Activated CD4-positive, alpha-beta T cell treated with anti-CD3 and anti-CD28 coated beads for 36 hours (primary cell): ENCODE measurements at regions of chr3 and their contacts with region 1.

Region 1: GRCh38 chr3:149812606-149813366 is at the start of gene RNF13:
- DNase-seq: peak; percentile 96
- ATAC-seq: peak; percentile 95
- H3K4me3 Mint-ChIP-seq: peak within 1 kb of the TSS; percentile 95
- H3K27ac Mint-ChIP-seq: peak within 1 kb of the TSS; percentile 100
- H3K4me1 Mint-ChIP-seq: peaks cover 46% of the 10 kb centered on the region
- H3K27me3 Mint-ChIP-seq: peaks cover 3% of the 10 kb centered on the region
- total RNA-seq, gene RNF13: 28.8 to 41.2 TPM

Region 2: GRCh38 chr3:148615385-148615784 is 1197.4 kb before region 1 on chr3:
- CTCF ChIA-PET with region 1: no interaction called
- POLR2A ChIA-PET with region 1: no interaction called
- intact Hi-C with region 1: no loop called
- DNase-seq: no peak
- ATAC-seq: no peak
- H3K4me3 Mint-ChIP-seq: no peak overlapping the region
- H3K27ac Mint-ChIP-seq: no peak overlapping the region
- H3K4me1 Mint-ChIP-seq: no peaks in the 10 kb centered on the region
- H3K27me3 Mint-ChIP-seq: no peaks in the 10 kb centered on the region

Region 3: DNA sequence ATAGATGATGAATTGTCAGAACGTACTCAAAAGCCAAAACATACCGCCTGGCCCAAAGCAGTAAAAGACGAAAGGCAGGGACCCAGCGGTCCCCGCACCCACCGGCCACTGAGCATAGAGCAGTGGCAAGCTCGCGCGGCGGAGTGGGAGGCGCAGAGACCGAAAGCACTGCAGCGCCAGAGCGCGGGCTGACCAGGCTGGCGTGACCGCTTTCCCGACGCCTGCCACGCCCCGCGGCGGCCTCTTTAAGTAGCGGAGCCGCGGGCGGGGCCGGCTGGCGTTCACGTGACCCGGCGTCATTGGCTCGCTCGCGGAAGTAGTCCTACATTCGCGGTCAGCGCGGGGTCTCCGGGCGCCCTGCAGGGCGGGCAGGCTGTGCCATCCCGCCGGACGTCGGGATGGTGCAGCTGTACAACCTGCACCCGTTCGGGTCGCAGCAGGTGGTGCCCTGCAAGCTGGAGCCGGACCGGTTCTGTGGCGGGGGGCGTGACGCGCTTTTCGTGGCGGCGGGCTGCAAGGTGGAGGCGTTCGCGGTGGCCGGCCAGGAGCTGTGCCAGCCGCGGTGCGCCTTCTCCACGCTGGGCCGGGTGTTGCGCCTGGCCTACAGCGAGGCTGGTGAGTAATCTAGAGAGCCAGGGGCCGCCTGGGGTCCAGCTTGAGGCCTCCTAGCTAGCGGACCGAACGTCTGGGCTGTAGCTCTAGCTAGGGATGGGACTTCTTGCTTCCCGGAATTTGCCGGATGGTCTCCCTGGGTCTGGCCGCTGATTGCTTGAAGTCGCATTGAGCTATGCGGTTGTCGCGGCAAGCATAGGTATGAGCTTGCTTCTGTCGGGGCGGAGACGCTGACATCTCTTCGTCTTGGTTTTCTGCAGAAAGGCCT is 683.2 kb before region 1 on chr3 and contains the start of gene HPS3:
- CTCF ChIA-PET with region 1: no interaction called
- POLR2A ChIA-PET with region 1: no interaction called
- intact Hi-C with region 1: loop called in 1 of 2 experiments (anchors 1 kb)
- DNase-seq: peak; percentile 90
- ATAC-seq: peak; percentile 91
- H3K4me3 Mint-ChIP-seq: peak within 1 kb of the TSS; percentile 90
- H3K27ac Mint-ChIP-seq: peak within 1 kb of the TSS; percentile 82
- H3K4me1 Mint-ChIP-seq: peaks cover 37% of the 10 kb centered on the region
- H3K27me3 Mint-ChIP-seq: peaks cover 8% of the 10 kb centered on the region
- total RNA-seq, gene HPS3: 18.0 to 20.2 TPM

Region 4: GRCh38 chr3:149512209-149512782 is 300.5 kb before region 1 on chr3:
- CTCF ChIA-PET with region 1: interaction called, 5 read pairs
- POLR2A ChIA-PET with region 1: no interaction called
- intact Hi-C with region 1: loop called (anchors 2 to 5 kb)
- DNase-seq: peak; percentile 56
- ATAC-seq: peak; percentile 57
- H3K4me3 Mint-ChIP-seq: no peak overlapping the region
- H3K27ac Mint-ChIP-seq: no peak overlapping the region
- H3K4me1 Mint-ChIP-seq: peaks cover 17% of the 10 kb centered on the region
- H3K27me3 Mint-ChIP-seq: peaks cover 17% of the 10 kb centered on the region

Region 5: GRCh38 chr3:149765762-149766334 is 46.9 kb before region 1 on chr3:
- CTCF ChIA-PET with region 1: interaction called, 46 read pairs
- POLR2A ChIA-PET with region 1: no interaction called
- intact Hi-C with region 1: loop called in 1 of 2 experiments (anchors 5 kb)
- DNase-seq: no peak
- ATAC-seq: no peak
- H3K4me3 Mint-ChIP-seq: no peak overlapping the region
- H3K27ac Mint-ChIP-seq: no peak overlapping the region
- H3K4me1 Mint-ChIP-seq: no peaks in the 10 kb centered on the region
- H3K27me3 Mint-ChIP-seq: peaks cover 24% of the 10 kb centered on the region